ENCODE measurements at regions of chr9 and their contacts with region 1.

Region 1: GRCh38 chr9:135971892-135972291 is 10.7 kb upstream of the UBAC1 start:
- DNase-seq: peak in 1 of 2 experiments; percentile 38
- ATAC-seq: peak; percentile 26 to 30; a peak in 4 of 6 replicates
- H3K4me3 ChIP-seq: no peak overlapping the region
- H3K27ac ChIP-seq: no peak overlapping the region
- H3K4me1 ChIP-seq: peaks cover 9% of the 10 kb centered on the region; the same call in 1 of the 3 replicates
- CTCF ChIP-seq: no peak
- EP300 ChIP-seq: no peak
- POLR2A ChIP-seq: no peak
- RAD21 ChIP-seq: no peak

Region 2: DNA sequence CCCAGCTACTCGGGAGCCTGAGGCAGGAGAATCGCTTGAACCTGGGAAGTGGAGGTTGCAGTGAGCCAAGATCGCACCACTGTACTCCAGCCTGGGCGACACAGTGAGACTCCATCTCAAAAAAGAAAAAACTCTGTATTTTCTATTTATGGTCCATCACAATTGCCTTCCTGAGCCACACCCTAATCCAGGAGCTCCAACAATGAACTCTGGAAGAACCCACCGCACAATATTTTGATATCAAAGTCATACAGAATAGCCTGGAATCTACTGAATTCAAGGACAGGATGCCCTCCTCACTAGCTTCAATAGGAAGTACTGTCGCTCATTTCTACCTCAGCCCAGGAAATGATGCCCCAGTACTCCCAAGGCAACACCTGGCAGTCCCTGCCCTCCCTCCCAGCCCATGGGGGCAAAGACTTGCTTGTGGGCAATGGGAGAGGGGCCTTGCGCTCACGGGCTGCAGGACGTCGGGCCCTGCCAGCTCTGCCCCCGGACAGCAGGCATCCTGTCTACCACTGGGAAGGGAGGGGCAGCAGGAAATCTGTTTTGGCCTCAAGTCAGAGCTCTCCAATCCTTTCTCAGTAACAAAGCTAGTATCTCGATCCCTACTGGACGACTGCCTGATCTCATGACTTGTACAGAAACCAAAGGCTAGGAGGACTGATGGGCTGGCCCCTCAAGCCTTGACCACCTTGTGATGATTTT is 30.4 kb before region 1 on chr9:
- CTCF ChIA-PET with region 1: interaction called, 17 read pairs
- POLR2A ChIA-PET with region 1: no interaction called
- DNase-seq: no peak
- ATAC-seq: no peak
- H3K4me3 ChIP-seq: no peak overlapping the region
- H3K27ac ChIP-seq: no peak overlapping the region
- H3K4me1 ChIP-seq: no peaks in the 10 kb centered on the region
- CTCF ChIP-seq: no peak
- EP300 ChIP-seq: no peak
- POLR2A ChIP-seq: no peak
- RAD21 ChIP-seq: no peak

Region 3: GRCh38 chr9:135992486-135993408 is 20.9 kb after region 1 on chr9:
- CTCF ChIA-PET with region 1: interaction called, 22 read pairs
- POLR2A ChIA-PET with region 1: interaction called, 5 read pairs
- DNase-seq: peak; percentile 36 to 70
- ATAC-seq: peak; percentile 37 to 72; a peak in 5 of 6 replicates
- H3K4me3 ChIP-seq: peak overlapping the region; percentile 7; the same call in 2 of the 3 replicates
- H3K27ac ChIP-seq: peak overlapping the region; percentile 72 to 92
- H3K4me1 ChIP-seq: peaks cover 25% of the 10 kb centered on the region
- CTCF ChIP-seq: no peak
- EP300 ChIP-seq: no peak
- POLR2A ChIP-seq: peak; percentile 5; the same call in 1 of the 2 replicates
- RAD21 ChIP-seq: no peak

Region 4: GRCh38 chr9:136079211-136079915 is 107.5 kb after region 1 on chr9:
- CTCF ChIA-PET with region 1: interaction called, 12 read pairs
- POLR2A ChIA-PET with region 1: no interaction called
- DNase-seq: no peak
- ATAC-seq: peak; percentile 51 to 61
- H3K4me3 ChIP-seq: no peak overlapping the region
- H3K27ac ChIP-seq: peak overlapping the region; percentile 52 to 77; a peak in 5 of 6 replicates
- H3K4me1 ChIP-seq: peaks cover 31% of the 10 kb centered on the region
- CTCF ChIP-seq: no peak
- EP300 ChIP-seq: no peak
- POLR2A ChIP-seq: no peak
- RAD21 ChIP-seq: 0 out of 5 replicates have a peak, but pooled peaks of 1 of the 2 experiments have one; percentile 10

Region 5: DNA sequence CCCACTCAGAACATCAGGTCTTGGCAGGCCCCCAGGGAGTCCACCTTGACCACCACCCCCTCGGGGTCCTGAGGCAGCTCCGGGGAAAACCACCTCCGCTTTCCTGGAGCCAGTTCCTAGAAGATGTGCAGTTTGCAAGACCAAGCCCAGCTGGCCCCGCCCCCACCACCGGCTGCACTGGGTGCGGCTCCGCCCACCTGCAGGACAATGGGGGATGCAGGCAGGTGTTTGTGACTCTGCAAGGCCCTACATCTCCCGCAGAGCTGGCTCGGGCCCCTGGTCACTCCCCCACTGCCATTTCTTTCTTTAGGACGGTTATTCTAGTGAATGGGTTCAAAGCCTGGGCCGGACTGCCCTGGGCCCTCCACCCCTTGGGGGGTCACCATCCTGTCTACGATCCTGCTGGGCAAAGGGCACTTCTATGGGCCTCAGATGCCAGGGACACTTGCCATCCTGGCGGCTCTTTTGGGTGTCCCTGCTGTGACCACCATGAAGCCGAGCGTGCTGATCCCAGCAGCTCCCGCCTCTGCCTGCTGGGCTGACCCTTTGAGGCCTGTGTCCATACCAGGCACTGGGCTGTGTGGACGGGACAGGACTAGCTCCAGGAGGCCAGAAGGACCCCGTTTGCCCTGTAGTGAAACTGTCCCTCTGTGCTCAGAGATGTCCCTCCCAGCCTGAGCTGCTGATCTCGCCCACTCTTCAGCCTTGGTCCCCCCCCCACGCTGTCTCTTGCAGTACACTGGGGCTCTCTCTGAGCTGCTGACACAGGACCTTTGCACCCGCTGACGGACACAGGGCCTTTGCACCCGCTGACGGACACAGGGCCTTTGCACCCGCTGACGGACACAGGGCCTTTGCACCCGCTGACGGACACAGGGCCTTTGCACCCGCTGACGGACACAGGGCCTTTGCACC is 129.1 kb after region 1 on chr9:
- CTCF ChIA-PET with region 1: interaction called, 17 read pairs
- POLR2A ChIA-PET with region 1: no interaction called
- DNase-seq: peak in 1 of 2 experiments; percentile 56
- ATAC-seq: peak; percentile 16 to 53; a peak in 4 of 6 replicates
- H3K4me3 ChIP-seq: no peak overlapping the region
- H3K27ac ChIP-seq: 0 out of 6 replicates have a peak overlapping the region, but pooled peaks of 1 of the 2 experiments have one; percentile 25
- H3K4me1 ChIP-seq: peaks cover 19% of the 10 kb centered on the region
- CTCF ChIP-seq: no peak
- EP300 ChIP-seq: no peak
- POLR2A ChIP-seq: no peak
- RAD21 ChIP-seq: no peak

Region 6: GRCh38 chr9:136147890-136148714 is 176.2 kb after region 1 on chr9:
- CTCF ChIA-PET with region 1: interaction called, 13 read pairs
- POLR2A ChIA-PET with region 1: no interaction called
- DNase-seq: no peak
- ATAC-seq: no peak
- H3K4me3 ChIP-seq: no peak overlapping the region
- H3K27ac ChIP-seq: no peak overlapping the region
- H3K4me1 ChIP-seq: no peaks in the 10 kb centered on the region
- CTCF ChIP-seq: no peak
- EP300 ChIP-seq: no peak
- POLR2A ChIP-seq: no peak
- RAD21 ChIP-seq: no peak

Measured in A549 (cell line).